ENCODE measurements at regions of chr9 and their contacts with region 1.

Region 1: DNA sequence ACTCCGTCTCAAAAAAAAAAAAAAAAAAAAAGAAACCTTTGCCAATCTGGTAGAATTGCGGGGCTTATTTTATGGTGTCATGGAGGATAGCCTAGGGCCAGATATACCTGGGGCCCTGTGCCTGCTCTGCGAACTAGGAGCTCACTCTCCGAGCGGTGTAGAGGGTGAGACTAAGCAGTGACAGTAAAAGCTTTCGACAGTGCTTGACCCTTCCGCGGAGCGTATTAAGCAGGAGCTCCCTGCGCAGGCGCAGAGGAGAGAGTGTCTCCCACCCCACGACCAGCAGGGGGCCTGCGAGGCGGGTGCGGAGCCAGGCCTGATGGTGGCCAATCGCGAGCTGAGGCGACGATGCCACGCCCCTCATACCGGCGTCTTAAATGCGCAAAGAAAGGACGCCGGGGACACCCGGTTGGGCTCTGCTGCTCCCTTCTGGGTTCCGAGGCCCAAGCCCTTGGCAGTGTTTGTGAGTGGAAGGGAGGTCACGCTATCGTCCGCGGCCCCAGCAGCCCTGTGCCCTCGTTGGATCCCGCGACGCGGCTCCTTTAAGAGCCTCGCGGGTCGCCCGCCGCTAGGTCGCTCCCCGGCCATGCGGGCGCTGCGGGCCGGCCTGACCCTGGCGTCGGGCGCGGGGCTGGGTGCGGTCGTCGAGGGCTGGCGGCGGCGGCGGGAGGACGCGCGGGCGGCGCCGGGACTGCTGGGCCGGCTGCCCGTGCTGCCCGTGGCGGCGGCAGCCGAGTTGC is at the start of gene ENDOG:
- DNase-seq: peak; percentile 67
- H3K4me3 ChIP-seq: peak within 1 kb of the TSS; percentile 61
- CTCF ChIP-seq: peak; percentile 100

Region 2: DNA sequence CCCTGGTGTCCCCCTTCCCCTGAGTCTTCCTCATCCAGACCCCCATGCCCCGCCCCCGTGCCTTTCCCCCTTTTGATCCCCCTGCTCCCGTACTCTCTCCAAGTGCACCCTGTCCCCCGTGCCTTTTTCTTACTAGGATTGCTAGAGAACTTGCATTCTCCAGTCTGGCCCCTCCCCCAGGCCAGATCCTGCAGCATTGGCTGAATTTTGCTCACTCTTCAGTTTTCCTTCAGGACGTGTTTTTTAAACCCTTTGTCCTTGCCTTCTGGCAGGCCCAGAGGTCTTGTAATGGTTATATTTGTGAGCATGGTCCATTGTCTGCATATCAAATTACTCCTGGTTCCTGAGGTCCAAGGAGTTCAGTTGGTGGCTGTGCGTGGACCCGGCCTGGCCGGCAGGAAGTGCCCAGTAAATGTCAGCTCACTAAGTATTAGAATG is 30.6 kb before region 1 on chr9:
- CTCF ChIA-PET with region 1: interaction called, 15 read pairs
- POLR2A ChIA-PET with region 1: interaction called, 4 read pairs
- DNase-seq: no peak
- H3K4me3 ChIP-seq: peak overlapping the region; percentile 99
- CTCF ChIP-seq: no peak

Region 3: DNA sequence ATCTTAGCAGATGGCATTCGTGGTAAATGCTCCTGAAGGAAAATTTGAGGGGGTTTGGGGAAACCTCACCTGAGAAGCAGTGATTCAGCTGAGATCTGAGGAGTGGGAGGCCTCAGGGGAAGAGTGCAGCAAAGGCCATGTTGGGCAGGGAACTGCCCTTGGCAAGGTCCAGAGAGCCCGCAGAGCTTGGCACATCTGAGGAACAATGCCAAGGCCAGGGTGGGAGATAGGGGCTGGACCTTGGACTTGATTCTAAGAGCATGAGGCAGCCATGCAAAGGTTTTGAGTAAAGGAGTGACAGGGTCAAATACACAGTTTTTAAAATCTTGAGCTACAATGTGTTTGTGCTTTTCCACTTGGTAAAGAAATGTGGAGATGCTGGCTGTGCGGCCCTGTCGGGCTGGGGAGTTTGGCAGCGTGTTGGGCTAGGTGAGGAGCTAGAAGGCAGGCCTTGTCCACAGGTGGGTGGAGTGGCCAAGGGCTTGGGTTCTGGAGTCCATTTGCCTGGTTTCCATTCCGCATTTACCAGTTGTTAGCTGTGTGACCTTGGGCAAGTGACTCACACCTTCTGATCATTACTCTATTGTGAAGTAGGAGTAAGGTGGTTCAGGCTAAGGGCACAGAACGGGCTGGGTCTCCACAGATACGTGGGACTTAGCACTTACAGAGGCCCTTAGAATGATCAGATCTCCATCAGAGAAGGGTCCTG is 25.1 kb before region 1 on chr9:
- CTCF ChIA-PET with region 1: interaction called, 15 read pairs
- POLR2A ChIA-PET with region 1: interaction called, 4 read pairs
- DNase-seq: no peak
- H3K4me3 ChIP-seq: no peak overlapping the region
- CTCF ChIP-seq: no peak

Region 4: GRCh38 chr9:128800061-128800460 is 18.2 kb before region 1 on chr9:
- CTCF ChIA-PET with region 1: interaction called, 26 read pairs
- POLR2A ChIA-PET with region 1: interaction called, 3 read pairs
- DNase-seq: no peak
- H3K4me3 ChIP-seq: no peak overlapping the region
- CTCF ChIP-seq: no peak

Region 5: GRCh38 chr9:128829477-128830251 is 11.4 kb after region 1 on chr9 and contains the start of gene SPOUT1:
- CTCF ChIA-PET with region 1: interaction called, 67 read pairs
- POLR2A ChIA-PET with region 1: interaction called, 13 read pairs
- DNase-seq: peak; percentile 26
- H3K4me3 ChIP-seq: peak within 1 kb of the TSS; percentile 89
- CTCF ChIP-seq: no peak

Region 6: DNA sequence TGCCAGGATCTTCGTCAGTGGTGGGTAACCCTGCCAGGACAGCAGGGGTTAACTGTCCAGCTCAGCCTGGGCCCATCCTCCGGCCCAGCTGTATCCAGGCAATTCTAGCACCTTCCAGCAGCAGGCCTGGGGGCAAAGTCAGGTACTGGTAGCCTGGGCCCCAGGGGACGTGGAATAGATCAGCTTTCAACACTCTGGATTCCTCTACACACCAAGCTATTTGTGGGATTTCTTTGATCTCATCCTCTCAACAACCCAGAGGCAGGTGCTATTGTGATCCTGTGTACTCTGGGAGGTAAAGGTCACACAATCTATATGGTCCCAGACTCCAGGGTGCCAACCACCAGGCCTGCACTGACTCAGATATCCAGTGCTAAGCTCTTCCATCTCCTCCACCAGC is 20.1 kb after region 1 on chr9:
- CTCF ChIA-PET with region 1: interaction called, 14 read pairs
- POLR2A ChIA-PET with region 1: interaction called, 3 read pairs
- DNase-seq: no peak
- H3K4me3 ChIP-seq: no peak overlapping the region
- CTCF ChIP-seq: no peak

Region 7: DNA sequence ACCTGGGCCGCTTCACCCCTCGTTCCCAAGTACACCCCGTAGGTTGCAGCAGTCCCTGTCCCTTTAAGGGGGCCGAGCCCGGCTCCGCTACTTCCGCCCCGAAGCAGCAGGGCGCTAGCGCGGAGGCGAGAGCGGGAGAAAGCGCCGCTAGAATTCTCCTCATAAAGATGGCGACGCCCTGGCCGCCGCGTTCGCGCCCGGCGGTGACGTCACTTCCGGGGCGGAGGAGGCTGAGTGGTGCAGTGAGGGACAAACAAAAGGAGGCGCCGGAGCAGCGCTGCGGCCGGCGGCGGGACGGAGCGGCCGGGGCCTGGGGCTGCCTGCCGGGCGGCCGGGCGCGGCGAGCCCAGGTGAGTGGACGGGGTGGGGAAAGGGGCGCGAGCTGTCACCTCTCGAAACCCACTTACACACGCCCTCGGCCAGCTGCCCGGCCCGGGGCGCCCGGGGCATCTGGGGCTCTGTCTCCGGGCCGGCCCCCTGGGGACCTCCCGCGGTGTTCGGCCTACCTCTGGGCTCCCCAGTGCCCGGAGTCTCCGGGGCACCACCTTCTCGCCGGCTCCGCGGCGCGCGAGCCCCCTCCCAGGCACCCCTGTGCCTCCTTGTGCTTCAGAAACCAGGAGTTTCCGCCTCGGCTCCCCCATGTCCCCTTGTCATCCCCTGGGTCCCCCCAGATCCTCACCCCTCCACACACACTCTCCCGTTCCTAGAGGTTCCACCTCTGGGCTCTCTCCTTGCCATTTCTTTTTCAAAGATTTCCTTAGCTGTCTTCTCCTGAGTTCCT is 63.8 kb after region 1 on chr9 and contains the starts of genes KYAT1 and LRRC8A:
- CTCF ChIA-PET with region 1: interaction called, 10 read pairs
- POLR2A ChIA-PET with region 1: no interaction called
- DNase-seq: peak; percentile 45
- H3K4me3 ChIP-seq: peak within 1 kb of the TSS; percentile 96
- CTCF ChIP-seq: no peak

Region 8: GRCh38 chr9:129036241-129036922 is 218.1 kb after region 1 on chr9 and contains the start of gene MIGA2:
- CTCF ChIA-PET with region 1: no interaction called
- POLR2A ChIA-PET with region 1: no interaction called
- DNase-seq: peak; percentile 92
- H3K4me3 ChIP-seq: peak within 1 kb of the TSS; percentile 97
- CTCF ChIP-seq: no peak

Measured in AG04449 (cell line).